ENCODE measurements at regions of chr2 and their contacts with region 1.

Region 1: GRCh38 chr2:70440621-70441020 is 113.0 kb downstream of the TGFA start:
- DNase-seq: no peak
- H3K4me3 ChIP-seq: no peak overlapping the region
- H3K27ac ChIP-seq: no peak overlapping the region
- H3K4me1 ChIP-seq: no peaks in the 10 kb centered on the region
- H3K27me3 ChIP-seq: peaks cover 18% of the 10 kb centered on the region
- CTCF ChIP-seq: no peak

Region 2: DNA sequence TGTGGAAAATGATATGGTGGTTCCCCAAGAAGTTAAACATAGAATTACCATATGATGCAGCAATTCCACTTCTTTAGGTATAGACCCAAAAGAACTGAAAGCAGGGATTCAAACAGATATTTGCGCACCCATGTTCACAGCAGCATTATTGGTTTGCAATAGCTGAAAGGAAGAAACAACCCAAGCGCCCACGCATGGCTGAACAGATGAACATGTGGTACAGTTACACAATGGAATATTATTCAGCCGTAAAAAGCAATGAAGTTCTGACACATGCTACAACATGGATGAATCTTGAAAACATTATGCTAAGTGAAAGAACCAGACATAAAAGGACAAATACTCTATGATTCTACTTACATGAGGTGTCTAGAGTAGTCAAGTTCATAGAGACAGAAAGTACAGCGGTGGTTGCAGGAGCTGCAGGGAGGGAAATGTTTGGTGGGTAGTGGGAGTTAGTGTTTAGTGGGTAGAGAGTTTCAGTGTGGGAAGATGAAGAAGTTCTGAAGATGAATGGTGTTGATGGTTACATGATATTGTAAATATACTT is 452.5 kb before region 1 on chr2:
- CTCF ChIA-PET with region 1: no interaction called
- POLR2A ChIA-PET with region 1: interaction called, 11 read pairs
- intact Hi-C with region 1: no loop called
- DNase-seq: no peak
- H3K4me3 ChIP-seq: no peak overlapping the region
- H3K27ac ChIP-seq: no peak overlapping the region
- H3K4me1 ChIP-seq: peaks cover 11% of the 10 kb centered on the region
- H3K27me3 ChIP-seq: no peaks in the 10 kb centered on the region
- CTCF ChIP-seq: no peak

Measured in A673 (cell line).